AG04450 (cell line): ENCODE measurements at regions of chr12 and their contacts with region 1.

Region 1: GRCh38 chr12:32115404-32116104 is 8.9 kb downstream of the BICD1 start:
- DNase-seq: peak; percentile 99
- H3K4me3 ChIP-seq: peak overlapping the region; percentile 35
- H3K27ac ChIP-seq: peak overlapping the region; percentile 94
- H3K27me3 ChIP-seq: no peaks in the 10 kb centered on the region
- CTCF ChIP-seq: no peak

Region 2: DNA sequence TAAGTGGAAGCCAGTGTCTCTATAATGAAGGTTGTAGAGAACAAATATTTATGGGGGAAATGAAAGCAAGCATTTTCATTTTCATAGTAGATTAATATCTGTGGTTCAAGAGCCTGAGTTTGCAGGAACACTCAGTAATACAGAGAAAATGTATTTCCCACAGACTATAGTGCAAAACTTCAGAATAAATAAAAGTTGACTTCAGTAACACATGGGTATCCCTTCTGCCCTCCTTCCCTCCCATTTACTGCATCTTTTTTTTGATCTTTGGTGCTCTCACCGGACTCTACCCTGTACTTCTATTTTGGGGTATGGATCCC is 311.4 kb before region 1 on chr12:
- CTCF ChIA-PET with region 1: no interaction called
- POLR2A ChIA-PET with region 1: no interaction called
- DNase-seq: no peak
- H3K4me3 ChIP-seq: no peak overlapping the region
- H3K27ac ChIP-seq: no peak overlapping the region
- H3K27me3 ChIP-seq: no peaks in the 10 kb centered on the region
- CTCF ChIP-seq: no peak

Region 3: DNA sequence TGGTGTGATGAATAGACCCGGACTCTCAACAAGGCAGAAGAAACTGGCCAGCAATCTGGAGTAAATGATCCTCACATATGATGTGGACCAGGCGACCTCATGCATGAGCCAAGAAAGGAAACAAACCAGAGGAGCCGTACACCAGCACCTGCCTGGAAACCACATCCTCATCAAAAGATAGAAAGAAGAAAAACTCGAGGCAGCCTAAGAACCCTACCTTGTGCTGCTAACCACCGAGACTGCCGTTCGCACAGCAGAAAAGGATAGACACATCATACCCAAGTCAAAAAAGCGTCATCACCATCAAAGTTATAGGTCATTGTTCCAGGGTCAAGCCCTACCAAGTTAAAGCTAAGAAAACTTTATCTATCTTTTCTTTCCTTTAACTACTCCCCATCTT is 89.6 kb before region 1 on chr12:
- CTCF ChIA-PET with region 1: no interaction called
- POLR2A ChIA-PET with region 1: no interaction called
- DNase-seq: no peak
- H3K4me3 ChIP-seq: no peak overlapping the region
- H3K27ac ChIP-seq: no peak overlapping the region
- H3K27me3 ChIP-seq: peaks cover 2% of the 10 kb centered on the region
- CTCF ChIP-seq: no peak

Region 4: DNA sequence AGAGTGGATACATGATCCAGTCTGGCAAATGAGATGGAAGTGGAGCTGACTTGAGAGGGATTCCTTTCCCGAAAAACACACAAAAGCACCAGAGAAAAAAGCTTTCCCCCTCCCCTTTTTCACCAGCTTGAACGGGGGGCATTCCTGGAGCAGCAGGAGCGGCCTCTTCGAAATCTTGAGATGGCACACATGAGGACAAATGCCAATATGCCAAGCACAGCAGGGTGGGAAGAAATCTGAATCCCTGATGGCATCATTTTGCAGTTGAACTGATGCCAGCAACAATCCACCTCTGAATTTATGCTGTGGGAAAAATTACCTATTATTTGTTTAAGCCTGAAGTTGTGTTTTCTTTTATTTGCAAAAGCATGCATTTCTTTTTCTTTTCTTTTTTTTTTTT is 38.6 kb before region 1 on chr12:
- CTCF ChIA-PET with region 1: interaction called, 11 read pairs
- POLR2A ChIA-PET with region 1: no interaction called
- DNase-seq: no peak
- H3K4me3 ChIP-seq: no peak overlapping the region
- H3K27ac ChIP-seq: no peak overlapping the region
- H3K27me3 ChIP-seq: no peaks in the 10 kb centered on the region
- CTCF ChIP-seq: no peak

Region 5: DNA sequence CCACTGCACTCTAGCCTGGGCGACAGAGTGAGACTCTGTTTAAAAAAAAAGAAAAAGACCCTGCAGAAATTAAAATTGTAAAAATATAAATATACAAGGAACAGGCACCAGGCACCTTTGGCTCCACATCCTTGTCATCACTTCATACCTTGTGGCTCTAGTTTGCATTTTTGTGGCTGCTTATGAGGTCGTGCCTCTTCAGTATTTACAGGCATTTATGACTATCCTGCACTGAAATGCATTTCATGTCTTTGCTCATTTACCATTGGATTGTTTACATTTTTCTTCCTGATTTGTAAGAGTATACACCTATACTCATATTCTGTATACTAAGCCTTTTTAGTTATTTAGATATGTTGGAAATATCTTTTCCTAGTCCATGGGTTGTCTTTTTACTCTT is 11.2 kb after region 1 on chr12:
- CTCF ChIA-PET with region 1: interaction called, 5 read pairs
- POLR2A ChIA-PET with region 1: interaction called, 10 read pairs
- DNase-seq: peak; percentile 76
- H3K4me3 ChIP-seq: no peak overlapping the region
- H3K27ac ChIP-seq: peak overlapping the region; percentile 83
- H3K27me3 ChIP-seq: no peaks in the 10 kb centered on the region
- CTCF ChIP-seq: no peak

Region 6: DNA sequence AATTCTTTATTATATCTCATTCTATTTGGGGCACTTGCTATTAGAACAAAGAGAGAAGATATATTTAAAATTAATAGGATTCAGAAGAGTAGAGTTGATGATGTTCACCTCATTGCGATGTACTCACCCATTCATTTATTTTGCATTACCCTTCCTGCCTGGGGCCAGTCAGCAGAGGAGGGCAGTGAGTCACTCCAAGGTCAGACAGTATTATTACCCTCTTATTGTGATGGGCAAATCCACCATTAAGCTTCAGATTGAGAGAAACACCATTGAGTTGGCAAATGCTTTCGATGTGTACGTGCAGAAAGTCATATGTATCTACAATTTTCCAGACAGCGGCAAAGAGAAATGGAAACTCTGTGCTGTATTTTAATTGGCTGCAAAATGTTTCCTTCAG is 125.3 kb after region 1 on chr12:
- CTCF ChIA-PET with region 1: no interaction called
- POLR2A ChIA-PET with region 1: no interaction called
- DNase-seq: no peak
- H3K4me3 ChIP-seq: no peak overlapping the region
- H3K27ac ChIP-seq: no peak overlapping the region
- H3K27me3 ChIP-seq: no peaks in the 10 kb centered on the region
- CTCF ChIP-seq: no peak